Naive thymus-derived CD4-positive, alpha-beta T cell (primary cell): ENCODE measurements at regions of chr6 and their contacts with region 1.

Region 1: DNA sequence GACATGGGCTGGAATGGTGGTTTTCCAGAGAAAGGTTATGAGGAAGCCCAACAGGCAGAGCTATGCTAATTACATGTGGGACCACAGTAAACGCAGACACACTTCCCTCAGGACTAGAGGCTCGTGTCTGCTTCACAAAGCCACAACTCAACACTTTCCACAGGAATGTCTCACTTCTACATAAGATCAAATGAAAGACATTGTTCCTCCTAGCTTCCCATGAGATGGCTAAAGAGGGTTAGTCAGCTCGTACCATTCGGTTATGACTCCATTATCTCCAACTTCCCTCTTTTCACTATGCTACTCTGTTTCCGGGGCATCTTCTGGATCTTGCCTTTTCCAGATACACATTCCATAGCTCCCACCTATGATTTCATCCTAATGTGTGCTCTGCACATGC is 29.1 kb upstream of the ZC3H12D start:
- DNase-seq: no peak
- ATAC-seq: peak; percentile 31
- H3K4me3 ChIP-seq: no peak overlapping the region
- H3K4me3 Mint-ChIP-seq: no peak overlapping the region
- H3K27ac ChIP-seq: no peak overlapping the region
- H3K27ac Mint-ChIP-seq: peak overlapping the region in 7 of 9 donors; percentile 42 to 72 (median 56)
- H3K4me1 ChIP-seq: peaks cover 13 to 16% of the 10 kb centered on the region in 2 donors
- H3K4me1 Mint-ChIP-seq: peaks cover 8 to 44% (median 43%) of the 10 kb centered on the region in 7 donors
- H3K27me3 ChIP-seq: no peaks in the 10 kb centered on the region
- H3K27me3 Mint-ChIP-seq: no peaks in the 10 kb centered on the region

Region 2: DNA sequence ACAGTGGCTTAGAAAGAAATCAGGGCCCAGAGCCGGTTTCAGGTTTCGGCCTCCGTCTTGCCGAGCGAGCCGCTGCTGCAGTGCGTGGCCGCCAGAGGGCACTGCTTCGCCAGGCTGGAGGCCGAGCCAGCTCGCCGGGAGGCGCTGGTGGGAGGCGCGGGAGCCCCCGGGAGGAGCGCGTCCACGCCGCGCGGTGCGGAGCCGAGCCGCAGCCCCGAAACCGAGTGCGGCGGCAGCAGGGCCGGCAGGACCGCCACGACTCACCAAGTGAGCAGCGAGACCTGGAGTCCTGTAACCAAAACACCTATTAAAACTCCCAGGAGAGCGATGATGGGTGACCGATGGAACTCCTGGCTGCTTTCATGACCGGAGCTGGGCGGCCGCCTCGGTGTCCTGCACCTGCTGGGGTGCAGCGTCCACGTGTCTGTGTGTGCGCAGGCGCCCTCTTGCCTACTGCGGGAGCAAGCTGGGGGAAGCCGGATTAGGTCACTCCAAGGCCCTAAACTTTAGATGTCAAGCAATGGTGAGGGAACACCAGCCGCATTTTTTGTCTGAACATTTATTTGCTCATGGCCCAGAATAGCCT is 954.0 kb before region 1 on chr6:
- CTCF ChIA-PET with region 1: no interaction called
- POLR2A ChIA-PET with region 1: no interaction called
- intact Hi-C with region 1: loop called in 1 of 2 experiments (anchors 5 kb)
- DNase-seq: peak; percentile 7 to 73 (median 53)
- ATAC-seq: peak; percentile 91
- H3K4me3 ChIP-seq: peak overlapping the region; percentile 31
- H3K4me3 Mint-ChIP-seq: peak overlapping the region in 5 of 10 donors; percentile 22 to 49 (median 28)
- H3K27ac ChIP-seq: no peak overlapping the region
- H3K27ac Mint-ChIP-seq: no peak overlapping the region
- H3K4me1 ChIP-seq: no peaks in the 10 kb centered on the region
- H3K4me1 Mint-ChIP-seq: peaks cover 0 to 8% (median 7%) of the 10 kb centered on the region in 7 donors
- H3K27me3 ChIP-seq: no peaks in the 10 kb centered on the region
- H3K27me3 Mint-ChIP-seq: peaks cover 21 to 44% (median 33%) of the 10 kb centered on the region in 5 donors

Region 3: GRCh38 chr6:149473080-149474052 is 40.5 kb before region 1 on chr6:
- CTCF ChIA-PET with region 1: interaction called, 15 read pairs
- POLR2A ChIA-PET with region 1: interaction called, 3 read pairs
- intact Hi-C with region 1: loop called (anchors 1 to 2 kb)
- DNase-seq: no peak
- ATAC-seq: peak; percentile 53
- H3K4me3 ChIP-seq: no peak overlapping the region
- H3K4me3 Mint-ChIP-seq: peak overlapping the region in 8 of 10 donors; percentile 4 to 59 (median 22)
- H3K27ac ChIP-seq: no peak overlapping the region
- H3K27ac Mint-ChIP-seq: peak overlapping the region in 6 of 9 donors; percentile 21 to 81 (median 44)
- H3K4me1 ChIP-seq: peaks cover 4 to 20% of the 10 kb centered on the region in 2 donors
- H3K4me1 Mint-ChIP-seq: peaks cover 4 to 50% (median 32%) of the 10 kb centered on the region in 7 donors
- H3K27me3 ChIP-seq: no peaks in the 10 kb centered on the region
- H3K27me3 Mint-ChIP-seq: no peaks in the 10 kb centered on the region

Region 4: GRCh38 chr6:149484733-149485700 is 28.9 kb before region 1 on chr6 and contains the start of gene ZC3H12D:
- CTCF ChIA-PET with region 1: interaction called, 14 read pairs
- POLR2A ChIA-PET with region 1: no interaction called
- intact Hi-C with region 1: loop called (anchors 1 kb)
- DNase-seq: peak; percentile 65 to 85 (median 79)
- ATAC-seq: peak; percentile 83
- H3K4me3 ChIP-seq: peak within 1 kb of the TSS; percentile 57
- H3K4me3 Mint-ChIP-seq: peak within 1 kb of the TSS; percentile 85 to 95 (median 92)
- H3K27ac ChIP-seq: peak within 1 kb of the TSS; percentile 90
- H3K27ac Mint-ChIP-seq: peak within 1 kb of the TSS; percentile 94 to 100 (median 98)
- H3K4me1 ChIP-seq: peaks cover 25 to 41% of the 10 kb centered on the region in 2 donors
- H3K4me1 Mint-ChIP-seq: peaks cover 34 to 68% (median 57%) of the 10 kb centered on the region in 7 donors
- H3K27me3 ChIP-seq: no peaks in the 10 kb centered on the region
- H3K27me3 Mint-ChIP-seq: no peaks in the 10 kb centered on the region
- total RNA-seq, gene ZC3H12D: 30.1 to 85.6 (median 74.1) TPM

Region 5: DNA sequence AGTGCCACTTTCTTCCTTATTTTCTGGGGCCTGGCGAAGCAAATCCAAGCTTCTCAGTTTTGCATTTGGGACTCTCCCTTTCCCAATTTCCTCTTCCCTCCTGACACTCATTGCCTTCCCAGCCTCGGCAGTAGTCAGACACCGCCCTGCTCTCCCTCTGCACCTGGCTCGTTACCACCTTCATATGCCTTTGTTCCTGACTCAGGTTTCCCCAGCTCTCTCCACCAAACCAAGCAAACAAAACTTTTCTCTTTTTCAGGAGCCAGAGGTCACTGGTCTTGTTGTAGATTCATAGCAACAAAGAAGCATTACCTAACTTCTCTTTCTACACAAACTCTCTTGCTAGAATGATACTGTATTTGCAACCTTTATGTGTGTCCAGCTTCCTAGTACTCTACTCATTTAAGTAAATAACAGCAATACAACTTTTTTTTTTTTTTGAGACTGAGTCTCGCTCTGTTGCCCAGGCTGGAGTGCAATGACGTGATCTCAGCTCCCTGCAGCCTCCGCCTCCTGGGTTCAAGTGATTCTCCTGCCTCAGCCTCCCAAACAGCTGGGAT is 20.1 kb before region 1 on chr6:
- CTCF ChIA-PET with region 1: interaction called, 43 read pairs
- POLR2A ChIA-PET with region 1: interaction called, 32 read pairs
- intact Hi-C with region 1: loop called in 1 of 2 experiments (anchors 1 kb)
- DNase-seq: no peak
- ATAC-seq: no peak
- H3K4me3 ChIP-seq: no peak overlapping the region
- H3K4me3 Mint-ChIP-seq: peak overlapping the region in 5 of 10 donors; percentile 1 to 75 (median 48)
- H3K27ac ChIP-seq: peak overlapping the region; percentile 94
- H3K27ac Mint-ChIP-seq: peak overlapping the region; percentile 84 to 100 (median 92)
- H3K4me1 ChIP-seq: peaks cover 16 to 48% of the 10 kb centered on the region in 2 donors
- H3K4me1 Mint-ChIP-seq: peaks cover 30 to 89% (median 58%) of the 10 kb centered on the region in 7 donors
- H3K27me3 ChIP-seq: no peaks in the 10 kb centered on the region
- H3K27me3 Mint-ChIP-seq: no peaks in the 10 kb centered on the region

Region 6: GRCh38 chr6:149499066-149499465 is 14.8 kb before region 1 on chr6:
- CTCF ChIA-PET with region 1: interaction called, 43 read pairs
- POLR2A ChIA-PET with region 1: interaction called, 32 read pairs
- intact Hi-C with region 1: loop called in 1 of 2 experiments (anchors 1 kb)
- DNase-seq: no peak
- ATAC-seq: no peak
- H3K4me3 ChIP-seq: no peak overlapping the region
- H3K4me3 Mint-ChIP-seq: no peak overlapping the region
- H3K27ac ChIP-seq: no peak overlapping the region
- H3K27ac Mint-ChIP-seq: peak overlapping the region in 8 of 9 donors; percentile 14 to 100 (median 80)
- H3K4me1 ChIP-seq: peaks cover 12 to 33% of the 10 kb centered on the region in 2 donors
- H3K4me1 Mint-ChIP-seq: peaks cover 18 to 68% (median 58%) of the 10 kb centered on the region in 7 donors
- H3K27me3 ChIP-seq: no peaks in the 10 kb centered on the region
- H3K27me3 Mint-ChIP-seq: no peaks in the 10 kb centered on the region